ENCODE measurements at regions of chr11 and their contacts with region 1.

Region 1: GRCh38 chr11:36002196-36002595 is 58.3 kb downstream of the LDLRAD3 start:
- DNase-seq: peak; percentile 75
- H3K4me3 ChIP-seq: no peak overlapping the region
- H3K27ac ChIP-seq: peak overlapping the region; percentile 50
- H3K4me1 ChIP-seq: peaks cover 17% of the 10 kb centered on the region
- H3K27me3 ChIP-seq: no peaks in the 10 kb centered on the region
- CTCF ChIP-seq: no peak
- POLR2A ChIP-seq: no peak

Region 2: DNA sequence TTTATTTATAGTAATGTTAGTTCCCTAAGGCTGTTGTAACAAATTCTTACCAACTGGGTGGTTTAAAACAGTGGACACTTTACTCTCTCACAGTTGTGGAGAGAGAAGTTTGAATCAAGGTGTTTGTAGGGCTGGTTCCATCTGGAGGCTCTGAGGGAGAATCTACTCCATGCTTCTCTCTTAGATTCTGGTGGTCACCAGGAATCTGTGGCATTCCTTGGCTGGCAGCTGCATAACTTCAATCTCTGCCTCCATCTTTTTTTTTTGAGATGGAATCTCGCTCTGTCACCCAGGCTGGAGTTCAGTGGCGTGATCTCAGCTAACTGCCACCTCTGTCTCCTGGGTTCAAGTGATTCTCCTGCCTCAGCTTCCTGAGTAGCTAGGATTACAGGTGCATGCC is 12.0 kb before region 1 on chr11:
- CTCF ChIA-PET with region 1: interaction called, 11 read pairs
- POLR2A ChIA-PET with region 1: no interaction called
- dilution Hi-C with region 1: no loop called
- intact Hi-C with region 1: no loop called
- DNase-seq: no peak
- H3K4me3 ChIP-seq: no peak overlapping the region
- H3K27ac ChIP-seq: no peak overlapping the region
- H3K4me1 ChIP-seq: no peaks in the 10 kb centered on the region
- H3K27me3 ChIP-seq: no peaks in the 10 kb centered on the region
- CTCF ChIP-seq: no peak
- POLR2A ChIP-seq: no peak

Measured in endothelial cell of umbilical vein (primary cell).